ENCODE measurements at regions of chr6 and their contacts with region 1.

Region 1: GRCh38 chr6:79078075-79079025 is at the start of gene PHIP:
- DNase-seq: peak; percentile 98
- ATAC-seq: peak; percentile 76
- H3K4me3 ChIP-seq: peak within 1 kb of the TSS; percentile 82 to 99 (median 86)
- H3K4me3 Mint-ChIP-seq: peak within 1 kb of the TSS; percentile 96
- H3K27ac ChIP-seq: peak within 1 kb of the TSS; percentile 95
- H3K27ac Mint-ChIP-seq: peak within 1 kb of the TSS; percentile 98
- H3K4me1 ChIP-seq: peaks cover 3 to 28% of the 10 kb centered on the region in 2 donors
- H3K4me1 Mint-ChIP-seq: peaks cover 38% of the 10 kb centered on the region
- H3K27me3 ChIP-seq: peaks cover 0 to 7% (median 0%) of the 10 kb centered on the region in 4 experiments
- H3K27me3 Mint-ChIP-seq: no peaks in the 10 kb centered on the region
- CTCF ChIP-seq: no peak
- total RNA-seq, gene PHIP: 52.7 and 53.3 TPM in 2 replicates

Region 2: DNA sequence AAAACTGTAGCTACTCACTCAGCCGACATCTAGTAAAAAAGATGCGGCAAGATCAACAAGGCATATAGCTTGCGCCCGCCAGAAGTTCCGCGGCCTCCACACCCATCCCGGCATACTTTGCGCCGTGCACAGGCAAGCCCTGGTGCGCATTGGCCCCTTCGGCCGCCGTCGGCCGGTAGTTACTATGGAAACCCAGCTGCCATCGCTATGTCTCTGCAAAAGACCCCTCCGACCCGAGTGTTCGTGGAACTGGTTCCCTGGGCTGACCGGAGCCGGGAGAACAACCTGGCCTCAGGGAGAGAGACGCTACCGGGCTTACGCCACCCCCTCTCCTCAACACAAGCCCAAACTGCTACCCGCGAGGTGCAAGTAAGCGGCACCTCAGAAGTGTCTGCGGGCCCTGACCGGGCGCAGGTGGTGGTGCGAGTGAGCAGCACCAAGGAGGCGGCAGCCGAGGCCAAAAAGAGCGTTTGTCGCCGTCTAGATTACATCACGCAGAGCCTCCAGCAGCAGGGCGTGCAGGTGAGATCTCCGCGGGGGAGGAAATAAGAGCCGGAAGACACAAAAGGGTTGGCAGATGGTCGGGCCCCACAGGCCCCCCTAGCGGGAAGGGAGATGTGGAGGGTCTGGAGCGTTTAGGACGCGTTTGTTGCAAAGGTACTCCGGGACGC is 210.8 kb before region 1 on chr6 and contains the start of gene IRAK1BP1:
- CTCF ChIA-PET with region 1: no interaction called
- POLR2A ChIA-PET with region 1: no interaction called
- intact Hi-C with region 1: loop called (anchors 1 kb)
- DNase-seq: peak; percentile 91
- ATAC-seq: peak; percentile 94
- H3K4me3 ChIP-seq: peak within 1 kb of the TSS; percentile 58 to 94 (median 92)
- H3K4me3 Mint-ChIP-seq: peak within 1 kb of the TSS; percentile 98
- H3K27ac ChIP-seq: peak within 1 kb of the TSS; percentile 69 to 91
- H3K27ac Mint-ChIP-seq: peak within 1 kb of the TSS; percentile 97
- H3K4me1 ChIP-seq: peaks cover 9 to 13% of the 10 kb centered on the region in 2 donors
- H3K4me1 Mint-ChIP-seq: peaks cover 23% of the 10 kb centered on the region
- H3K27me3 ChIP-seq: no peaks in the 10 kb centered on the region
- H3K27me3 Mint-ChIP-seq: no peaks in the 10 kb centered on the region
- CTCF ChIP-seq: peak; percentile 18
- total RNA-seq, gene IRAK1BP1: 3.0 and 3.2 TPM in 2 replicates

Region 3: DNA sequence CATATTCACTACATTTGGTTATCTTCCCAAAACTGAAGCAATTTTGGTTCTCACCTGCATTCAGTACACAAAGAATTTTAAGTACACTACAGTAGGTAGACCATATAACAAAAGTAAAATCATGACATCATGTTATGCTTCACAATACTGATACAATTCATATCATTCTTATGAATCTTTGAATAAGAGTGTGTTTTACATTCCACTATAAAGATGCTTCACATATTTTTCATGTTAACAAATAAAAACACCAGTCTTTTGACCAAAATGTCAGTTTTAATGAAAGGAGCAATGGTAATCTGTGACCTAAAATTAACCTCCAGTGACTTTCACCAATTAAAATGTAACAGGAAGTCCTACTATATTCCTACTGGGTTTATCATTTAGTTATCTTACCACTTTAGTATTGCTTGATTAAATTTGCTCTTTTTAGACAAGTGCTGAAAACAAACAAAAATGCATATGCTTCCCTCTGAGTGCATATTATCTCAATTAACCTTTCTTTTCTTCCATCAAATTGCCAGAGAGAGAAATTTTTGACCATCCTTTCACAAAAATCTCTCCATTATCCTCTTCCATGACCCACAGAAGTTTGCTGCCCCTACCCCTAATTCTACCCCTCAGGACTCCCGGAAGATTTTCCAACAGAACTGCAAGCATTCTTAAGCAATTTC is 49.6 kb before region 1 on chr6:
- CTCF ChIA-PET with region 1: no interaction called
- POLR2A ChIA-PET with region 1: no interaction called
- intact Hi-C with region 1: loop called (anchors 10 kb)
- DNase-seq: no peak
- ATAC-seq: no peak
- H3K4me3 ChIP-seq: no peak overlapping the region
- H3K4me3 Mint-ChIP-seq: no peak overlapping the region
- H3K27ac ChIP-seq: no peak overlapping the region
- H3K27ac Mint-ChIP-seq: peak overlapping the region; percentile 10
- H3K4me1 ChIP-seq: no peaks in the 10 kb centered on the region
- H3K4me1 Mint-ChIP-seq: peaks cover 10% of the 10 kb centered on the region
- H3K27me3 ChIP-seq: no peaks in the 10 kb centered on the region
- H3K27me3 Mint-ChIP-seq: no peaks in the 10 kb centered on the region
- CTCF ChIP-seq: no peak

Region 4: GRCh38 chr6:79233611-79234149 is 155.3 kb after region 1 on chr6:
- CTCF ChIA-PET with region 1: interaction called, 3 read pairs
- POLR2A ChIA-PET with region 1: interaction called, 3 read pairs
- intact Hi-C with region 1: loop called (anchors 1 kb)
- DNase-seq: peak; percentile 75
- ATAC-seq: peak; percentile 35
- H3K4me3 ChIP-seq: peak overlapping the region; percentile 87 to 97 (median 93)
- H3K4me3 Mint-ChIP-seq: peak overlapping the region; percentile 95
- H3K27ac ChIP-seq: peak overlapping the region; percentile 52 to 66
- H3K27ac Mint-ChIP-seq: peak overlapping the region; percentile 90
- H3K4me1 ChIP-seq: peaks cover 5 to 7% of the 10 kb centered on the region in 2 donors
- H3K4me1 Mint-ChIP-seq: peaks cover 19% of the 10 kb centered on the region
- H3K27me3 ChIP-seq: no peaks in the 10 kb centered on the region
- H3K27me3 Mint-ChIP-seq: no peaks in the 10 kb centered on the region
- CTCF ChIP-seq: peak; percentile 27

Region 5: DNA sequence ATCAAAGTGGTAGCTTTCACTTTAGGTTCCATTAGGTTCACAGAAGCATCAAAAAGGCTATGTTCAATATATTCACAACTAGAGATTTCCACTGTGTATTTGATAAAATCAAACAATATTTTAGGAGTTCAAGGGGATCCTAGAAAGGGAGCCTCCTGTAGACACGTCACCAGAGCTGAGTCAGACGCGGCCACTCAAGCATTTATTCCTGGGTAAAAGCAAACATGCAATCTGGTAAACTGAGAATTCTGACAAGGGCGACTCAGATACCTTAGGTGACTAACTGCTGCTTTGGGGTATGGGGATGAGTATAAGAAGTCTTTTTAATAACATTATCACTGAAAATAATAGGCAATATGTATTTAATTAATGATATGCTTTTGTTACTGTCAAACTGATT is 274.9 kb after region 1 on chr6:
- CTCF ChIA-PET with region 1: no interaction called
- POLR2A ChIA-PET with region 1: no interaction called
- intact Hi-C with region 1: no loop called
- DNase-seq: no peak
- ATAC-seq: no peak
- H3K4me3 ChIP-seq: no peak overlapping the region
- H3K4me3 Mint-ChIP-seq: no peak overlapping the region
- H3K27ac ChIP-seq: no peak overlapping the region
- H3K27ac Mint-ChIP-seq: no peak overlapping the region
- H3K4me1 ChIP-seq: no peaks in the 10 kb centered on the region
- H3K4me1 Mint-ChIP-seq: no peaks in the 10 kb centered on the region
- H3K27me3 ChIP-seq: no peaks in the 10 kb centered on the region
- H3K27me3 Mint-ChIP-seq: no peaks in the 10 kb centered on the region
- CTCF ChIP-seq: no peak

Region 6: GRCh38 chr6:79536954-79537747 is 458.8 kb after region 1 on chr6 and contains the start of gene LCA5:
- CTCF ChIA-PET with region 1: no interaction called
- POLR2A ChIA-PET with region 1: interaction called, 3 read pairs
- intact Hi-C with region 1: loop called (anchors 1 kb)
- DNase-seq: peak; percentile 92
- ATAC-seq: peak; percentile 97
- H3K4me3 ChIP-seq: peak within 1 kb of the TSS; percentile 63 to 92 (median 81)
- H3K4me3 Mint-ChIP-seq: no peak within 1 kb of the TSS
- H3K27ac ChIP-seq: peak within 1 kb of the TSS; percentile 31 to 59
- H3K27ac Mint-ChIP-seq: no peak within 1 kb of the TSS
- H3K4me1 ChIP-seq: peaks cover 12 to 15% of the 10 kb centered on the region in 2 donors
- H3K4me1 Mint-ChIP-seq: no peaks in the 10 kb centered on the region
- H3K27me3 ChIP-seq: peaks cover 0 to 5% (median 0%) of the 10 kb centered on the region in 4 experiments
- H3K27me3 Mint-ChIP-seq: peaks cover 9% of the 10 kb centered on the region
- CTCF ChIP-seq: no peak
- total RNA-seq, gene LCA5: 0.91 and 0.92 TPM in 2 replicates

Region 7: GRCh38 chr6:80106418-80107235 is 1028.3 kb after region 1 on chr6 and contains the start of gene BCKDHB:
- CTCF ChIA-PET with region 1: no interaction called
- POLR2A ChIA-PET with region 1: no interaction called
- intact Hi-C with region 1: loop called (anchors 2 kb)
- DNase-seq: peak; percentile 99
- ATAC-seq: peak; percentile 98
- H3K4me3 ChIP-seq: peak within 1 kb of the TSS; percentile 52 to 93 (median 83)
- H3K4me3 Mint-ChIP-seq: peak within 1 kb of the TSS; percentile 93
- H3K27ac ChIP-seq: peak within 1 kb of the TSS in 1 of 2 donors; percentile 67
- H3K27ac Mint-ChIP-seq: peak within 1 kb of the TSS; percentile 91
- H3K4me1 ChIP-seq: peaks cover 4 to 12% of the 10 kb centered on the region in 2 donors
- H3K4me1 Mint-ChIP-seq: peaks cover 13% of the 10 kb centered on the region
- H3K27me3 ChIP-seq: peaks cover 0 to 19% (median 5%) of the 10 kb centered on the region in 4 experiments
- H3K27me3 Mint-ChIP-seq: peaks cover 11% of the 10 kb centered on the region
- CTCF ChIP-seq: no peak
- total RNA-seq, gene BCKDHB: 20.1 and 21.4 TPM in 2 replicates

Measured in B cell (primary cell).